ENCODE measurements at regions of chr2 and their contacts with region 1.

Region 1: GRCh38 chr2:230847883-230848388 is 16.8 kb upstream of the ITM2C start:
- DNase-seq: peak; percentile 95
- H3K4me3 Mint-ChIP-seq: no peak overlapping the region
- H3K27ac Mint-ChIP-seq: peak overlapping the region; percentile 1
- H3K4me1 Mint-ChIP-seq: peaks cover 13% of the 10 kb centered on the region
- H3K27me3 Mint-ChIP-seq: peaks cover 66% of the 10 kb centered on the region

Region 2: DNA sequence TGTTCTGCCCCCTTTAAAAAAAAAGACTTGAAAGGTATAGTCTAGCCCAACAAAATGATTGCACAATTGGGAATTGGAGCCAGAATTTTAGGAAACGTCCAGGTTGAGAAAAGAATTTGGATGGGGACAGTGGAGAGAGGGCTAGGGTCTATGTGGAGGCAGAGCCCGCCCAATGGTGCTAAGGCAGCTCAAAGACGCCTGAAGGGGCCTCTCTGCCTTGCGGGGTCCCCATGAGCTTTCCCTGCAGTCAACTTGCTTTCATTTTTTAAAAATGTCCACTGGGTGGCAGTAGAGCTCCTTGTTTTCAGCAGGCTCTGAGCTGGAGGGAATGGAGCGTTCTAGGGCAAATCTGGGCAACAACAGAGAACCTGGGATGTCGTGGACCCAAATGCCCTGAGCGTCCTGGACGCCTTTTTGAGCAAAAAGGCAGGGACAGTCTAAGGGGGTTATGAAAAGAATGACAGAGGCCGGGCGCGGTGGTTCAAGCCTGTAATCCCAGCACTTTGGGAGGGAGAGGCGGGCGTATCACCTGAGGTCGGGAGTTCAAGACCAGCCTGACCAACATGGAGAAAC is 23.4 kb before region 1 on chr2:
- intact Hi-C with region 1: loop called (anchors 1 kb)
- DNase-seq: peak; percentile 89
- H3K4me3 Mint-ChIP-seq: peak overlapping the region; percentile 55
- H3K27ac Mint-ChIP-seq: no peak overlapping the region
- H3K4me1 Mint-ChIP-seq: peaks cover 11% of the 10 kb centered on the region
- H3K27me3 Mint-ChIP-seq: peaks cover 36% of the 10 kb centered on the region

Region 3: DNA sequence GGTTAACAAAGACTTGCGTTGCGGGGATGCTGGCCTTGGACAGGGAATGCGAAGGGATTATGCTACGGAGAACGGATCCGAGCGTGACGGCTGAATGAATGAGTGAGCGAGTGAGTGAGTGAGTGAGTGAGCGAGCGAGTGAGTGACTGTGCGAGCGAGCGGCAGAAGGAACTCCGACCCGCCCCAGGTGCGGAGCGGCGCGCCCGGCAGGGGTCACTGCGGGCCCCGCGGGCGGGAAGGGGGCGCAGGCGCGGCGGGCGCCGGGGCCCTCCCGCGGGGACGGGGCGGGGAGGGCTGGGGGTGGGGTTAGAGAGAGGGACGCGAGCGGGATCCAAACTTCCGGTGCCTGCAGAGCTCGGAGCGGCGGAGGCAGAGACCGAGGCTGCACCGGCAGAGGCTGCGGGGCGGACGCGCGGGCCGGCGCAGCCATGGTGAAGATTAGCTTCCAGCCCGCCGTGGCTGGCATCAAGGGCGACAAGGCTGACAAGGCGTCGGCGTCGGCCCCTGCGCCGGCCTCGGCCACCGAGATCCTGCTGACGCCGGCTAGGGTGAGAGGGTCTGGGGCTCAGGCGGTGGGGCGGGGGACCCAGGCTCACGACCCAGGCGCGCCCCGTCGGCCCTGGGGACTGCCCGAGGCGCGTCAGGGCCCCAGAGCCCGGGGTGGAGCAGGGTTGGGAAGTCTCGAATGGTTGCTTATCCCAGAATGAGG is 16.8 kb after region 1 on chr2 and contains the start of gene ITM2C:
- intact Hi-C with region 1: loop called (anchors 1 kb)
- DNase-seq: peak; percentile 91
- H3K4me3 Mint-ChIP-seq: peak within 1 kb of the TSS; percentile 83
- H3K27ac Mint-ChIP-seq: peak within 1 kb of the TSS; percentile 52
- H3K4me1 Mint-ChIP-seq: peaks cover 24% of the 10 kb centered on the region
- H3K27me3 Mint-ChIP-seq: peaks cover 50% of the 10 kb centered on the region
- total RNA-seq, gene ITM2C: 8.3 and 10.3 TPM in 2 replicates

Region 4: GRCh38 chr2:230924470-230925341 is 76.8 kb after region 1 on chr2 and contains the start of gene GPR55:
- intact Hi-C with region 1: no loop called
- DNase-seq: peak; percentile 76
- H3K4me3 Mint-ChIP-seq: peak within 1 kb of the TSS; percentile 66
- H3K27ac Mint-ChIP-seq: peak within 1 kb of the TSS; percentile 82
- H3K4me1 Mint-ChIP-seq: peaks cover 42% of the 10 kb centered on the region
- H3K27me3 Mint-ChIP-seq: peaks cover 24% of the 10 kb centered on the region
- total RNA-seq, gene GPR55: 0.23 and 0.38 TPM in 2 replicates

Measured in activated CD4-positive, alpha-beta T cell treated with anti-CD3 and anti-CD28 coated beads, Interleukin-2, amount 10 ng/mL, durations not matched to agents 24 days and 14 days (primary cell).